ENCODE measurements at regions of chr6 and their contacts with region 1.

Region 1: GRCh38 chr6:129701721-129702455 is 8.1 kb downstream of the ARHGAP18 start:
- DNase-seq: no peak
- ATAC-seq: no peak
- H3K4me3 ChIP-seq: peak overlapping the region; percentile 30; the same call in 1 of the 2 replicates
- H3K27ac ChIP-seq: peak overlapping the region; percentile 14; the same call in 1 of the 2 replicates
- H3K4me1 ChIP-seq: peaks cover 37% of the 10 kb centered on the region
- H3K27me3 ChIP-seq: no peaks in the 10 kb centered on the region
- CTCF ChIP-seq: no peak
- EP300 ChIP-seq: no peak
- POLR2A ChIP-seq: no peak
- RAD21 ChIP-seq: no peak

Region 2: GRCh38 chr6:129661536-129662405 is 40.1 kb before region 1 on chr6:
- CTCF ChIA-PET with region 1: interaction called, 3 read pairs
- POLR2A ChIA-PET with region 1: interaction called, 5 read pairs
- RAD21 ChIA-PET with region 1: interaction called, 5 read pairs
- SMC1A ChIA-PET with region 1: interaction called, 13 read pairs
- in situ Hi-C with region 1: no loop called
- intact Hi-C with region 1: no loop called
- DNase-seq: no peak
- ATAC-seq: peak; percentile 40
- H3K4me3 ChIP-seq: peak overlapping the region; percentile 7; the same call in 1 of the 2 replicates
- H3K27ac ChIP-seq: peak overlapping the region; percentile 89
- H3K4me1 ChIP-seq: peaks cover 44% of the 10 kb centered on the region
- H3K27me3 ChIP-seq: no peaks in the 10 kb centered on the region
- CTCF ChIP-seq: no peak
- EP300 ChIP-seq: peak in 1 of 2 experiments; percentile 61; a peak in 1 of 4 replicates
- POLR2A ChIP-seq: no peak
- RAD21 ChIP-seq: no peak

Region 3: DNA sequence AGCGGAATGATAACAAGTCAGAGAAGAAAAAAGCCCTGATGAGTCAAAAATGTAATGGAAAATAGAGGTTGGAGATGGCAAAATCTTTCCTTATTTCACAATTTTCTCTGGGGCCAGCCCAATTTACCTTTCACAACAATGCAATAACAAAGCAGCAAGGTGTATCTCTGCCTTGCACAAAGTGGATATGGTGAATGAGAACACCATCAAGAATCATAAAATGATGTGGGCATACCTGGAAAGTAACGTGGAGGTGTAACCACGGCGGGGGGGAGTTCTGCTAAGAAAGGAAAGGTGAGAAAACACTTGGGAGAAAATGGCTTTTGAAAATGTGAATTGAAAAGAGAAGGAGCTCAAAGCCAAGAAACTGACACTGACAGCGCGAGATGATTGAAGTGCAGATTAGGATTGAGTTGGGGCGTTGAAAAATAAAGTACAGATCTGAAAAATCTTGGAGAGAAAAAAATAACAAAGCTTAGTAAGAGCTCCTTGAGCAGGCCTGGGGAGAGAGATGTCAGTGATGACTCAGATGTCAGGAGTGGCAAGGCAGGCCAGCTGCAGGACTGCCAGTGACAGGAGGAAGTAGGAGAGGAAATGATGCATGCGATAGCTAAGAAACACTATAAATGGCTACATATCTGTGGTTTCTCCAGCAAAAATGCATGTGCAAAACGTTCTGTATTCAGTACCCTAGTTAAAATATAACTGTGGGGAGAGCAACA is 18.1 kb before region 1 on chr6:
- CTCF ChIA-PET with region 1: interaction called, 117 read pairs
- POLR2A ChIA-PET with region 1: interaction called, 115 read pairs
- RAD21 ChIA-PET with region 1: interaction called, 189 read pairs
- SMC1A ChIA-PET with region 1: interaction called, 434 read pairs
- in situ Hi-C with region 1: no loop called
- intact Hi-C with region 1: loop called (anchors 2 kb)
- DNase-seq: peak; percentile 88
- ATAC-seq: peak; percentile 90
- H3K4me3 ChIP-seq: peak overlapping the region; percentile 30; the same call in 1 of the 2 replicates
- H3K27ac ChIP-seq: peak overlapping the region; percentile 93
- H3K4me1 ChIP-seq: peaks cover 48% of the 10 kb centered on the region
- H3K27me3 ChIP-seq: no peaks in the 10 kb centered on the region
- CTCF ChIP-seq: no peak
- EP300 ChIP-seq: peak; percentile 97 to 98
- POLR2A ChIP-seq: peak; percentile 38; the same call in 1 of the 2 replicates
- RAD21 ChIP-seq: peak; percentile 16; the same call in 1 of the 2 replicates

Region 4: DNA sequence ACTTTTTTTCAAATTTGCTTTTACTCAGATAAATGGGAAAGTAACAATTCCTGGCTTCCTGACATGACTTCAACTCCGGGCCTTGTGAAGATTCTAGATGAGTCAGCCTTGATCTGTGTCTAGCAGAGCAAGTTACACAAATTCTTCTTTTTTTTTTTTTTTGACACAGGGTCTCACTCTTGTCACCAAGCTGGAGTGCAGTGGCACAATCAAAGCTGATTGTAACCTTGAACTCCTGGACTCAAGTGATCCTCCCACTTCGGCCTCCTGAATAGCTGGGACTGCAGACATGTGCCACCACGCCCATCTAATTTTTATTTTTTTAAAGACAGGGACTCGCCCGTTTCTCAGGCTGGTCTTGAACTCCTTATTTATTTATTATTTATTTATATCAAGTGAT is 15.4 kb after region 1 on chr6:
- CTCF ChIA-PET with region 1: interaction called, 4 read pairs
- POLR2A ChIA-PET with region 1: interaction called, 10 read pairs
- RAD21 ChIA-PET with region 1: interaction called, 4 read pairs
- SMC1A ChIA-PET with region 1: interaction called, 87 read pairs
- in situ Hi-C with region 1: no loop called
- intact Hi-C with region 1: no loop called
- DNase-seq: no peak
- ATAC-seq: no peak
- H3K4me3 ChIP-seq: no peak overlapping the region
- H3K27ac ChIP-seq: no peak overlapping the region
- H3K4me1 ChIP-seq: no peaks in the 10 kb centered on the region
- H3K27me3 ChIP-seq: no peaks in the 10 kb centered on the region
- CTCF ChIP-seq: no peak
- EP300 ChIP-seq: no peak
- POLR2A ChIP-seq: no peak
- RAD21 ChIP-seq: no peak